ENCODE measurements at regions of chr20 and their contacts with region 1.

Region 1: GRCh38 chr20:2822073-2822472 is 5.9 kb downstream of the TMEM239 start:
- DNase-seq: no peak
- ATAC-seq: no peak; the same call in 2 of the 3 replicates
- H3K4me3 ChIP-seq: no peak overlapping the region
- H3K27ac ChIP-seq: no peak overlapping the region
- H3K4me1 ChIP-seq: no peaks in the 10 kb centered on the region; the same call in 1 of the 2 replicates
- H3K27me3 ChIP-seq: no peaks in the 10 kb centered on the region
- CTCF ChIP-seq: no peak
- EP300 ChIP-seq: no peak
- POLR2A ChIP-seq: no peak
- RAD21 ChIP-seq: no peak

Region 2: DNA sequence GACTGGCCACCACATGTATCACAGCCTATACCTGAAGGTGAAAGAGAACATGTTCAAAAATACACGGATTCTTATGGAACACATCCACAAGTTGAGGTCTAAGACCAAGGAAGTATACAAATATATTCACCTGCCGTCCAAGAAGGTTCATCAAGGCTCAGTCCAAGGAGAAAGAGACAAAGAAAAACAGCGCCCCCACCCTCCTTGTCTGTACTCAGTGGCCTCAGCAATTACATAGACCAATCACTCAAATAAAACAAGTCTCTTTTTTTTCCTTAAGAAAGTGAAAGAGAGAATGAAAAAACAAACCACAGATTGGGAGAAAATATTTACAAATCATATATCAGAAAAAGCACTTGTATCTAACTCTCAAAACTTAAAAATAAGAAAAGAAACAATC is 41.1 kb before region 1 on chr20:
- CTCF ChIA-PET with region 1: no interaction called
- POLR2A ChIA-PET with region 1: no interaction called
- RAD21 ChIA-PET with region 1: no interaction called
- SMC1A ChIA-PET with region 1: no interaction called
- in situ Hi-C with region 1: no loop called
- intact Hi-C with region 1: no loop called
- DNase-seq: no peak
- ATAC-seq: no peak
- H3K4me3 ChIP-seq: no peak overlapping the region
- H3K27ac ChIP-seq: no peak overlapping the region
- H3K4me1 ChIP-seq: peaks cover 3% of the 10 kb centered on the region; the same call in 1 of the 2 replicates
- H3K27me3 ChIP-seq: peaks cover 0 to 10% of the 10 kb centered on the region in 2 experiments; a peak in 2 of 4 replicates
- CTCF ChIP-seq: peak in 1 of 3 experiments; percentile 19; a peak in 1 of 6 replicates
- EP300 ChIP-seq: no peak
- POLR2A ChIP-seq: no peak
- RAD21 ChIP-seq: no peak

Region 3: GRCh38 chr20:4038047-4038459 is 1216.0 kb after region 1 on chr20:
- CTCF ChIA-PET with region 1: no interaction called
- POLR2A ChIA-PET with region 1: no interaction called
- RAD21 ChIA-PET with region 1: no interaction called
- SMC1A ChIA-PET with region 1: no interaction called
- in situ Hi-C with region 1: loop called (anchors 5 kb)
- intact Hi-C with region 1: no loop called
- DNase-seq: peak; percentile 75
- ATAC-seq: peak; percentile 99
- H3K4me3 ChIP-seq: 0 out of 2 replicates have a peak overlapping the region, but pooled peaks have one; percentile 20
- H3K27ac ChIP-seq: peak overlapping the region; percentile 79
- H3K4me1 ChIP-seq: peaks cover 12% of the 10 kb centered on the region
- H3K27me3 ChIP-seq: no peaks in the 10 kb centered on the region
- CTCF ChIP-seq: no peak
- EP300 ChIP-seq: peak; percentile 63 to 75; a peak in 3 of 4 replicates
- POLR2A ChIP-seq: peak; percentile 86
- RAD21 ChIP-seq: no peak

Measured in GM12878 (cell line).